HepG2 (cell line): ENCODE measurements at regions of chr1 and their contacts with region 1.

Region 1: DNA sequence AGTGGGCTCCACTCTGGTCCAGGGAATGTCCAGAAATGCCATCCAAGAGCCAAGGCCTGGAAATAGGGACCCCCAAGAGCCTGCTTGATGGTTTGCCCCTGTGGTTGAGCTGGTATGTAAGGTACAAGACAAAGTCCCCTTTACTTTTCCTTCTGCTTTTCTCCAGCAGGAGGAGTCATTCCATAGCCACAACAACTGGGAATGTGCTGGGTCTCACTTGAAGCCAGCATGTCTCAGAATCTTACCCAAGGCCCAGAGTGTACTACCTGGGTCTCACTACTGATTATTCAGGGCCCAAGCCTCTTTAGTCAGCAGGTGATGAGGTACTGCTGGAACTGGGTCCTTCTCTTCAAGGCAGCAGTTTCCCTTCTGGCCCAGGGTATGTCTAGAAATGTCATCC is 62.1 kb upstream of the CD55 start:
- DNase-seq: peak; percentile 23
- ATAC-seq: peak; percentile 72
- H3K4me3 ChIP-seq: no peak overlapping the region
- H3K27ac ChIP-seq: no peak overlapping the region
- H3K4me1 ChIP-seq: no peaks in the 10 kb centered on the region
- H3K27me3 ChIP-seq: no peaks in the 10 kb centered on the region
- CTCF ChIP-seq: peak; percentile 53
- EP300 ChIP-seq: no peak
- POLR2A ChIP-seq: no peak
- RAD21 ChIP-seq: 0 out of 2 replicates have a peak, but pooled peaks have one; percentile 29

Region 2: DNA sequence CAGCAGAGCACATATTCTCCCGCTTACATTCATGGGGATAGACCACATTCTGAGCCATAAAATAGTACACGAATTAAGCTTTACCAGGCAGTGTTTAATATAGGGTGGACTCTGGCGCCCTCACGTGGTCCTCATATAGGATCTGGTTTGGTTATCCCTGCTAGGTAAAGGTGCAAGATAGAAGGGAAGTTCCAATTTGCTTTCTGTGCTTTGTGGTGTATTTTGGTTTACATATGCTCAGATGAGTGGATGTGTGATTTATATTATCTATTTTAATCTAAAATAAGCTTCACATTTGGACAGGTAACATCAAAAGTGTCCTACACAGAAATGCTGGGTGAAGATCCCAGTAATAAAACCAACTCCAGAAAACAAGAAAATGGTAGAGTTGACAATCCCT is 240.2 kb after region 1 on chr1:
- CTCF ChIA-PET with region 1: interaction called, 3 read pairs
- POLR2A ChIA-PET with region 1: no interaction called
- in situ Hi-C with region 1: no loop called
- intact Hi-C with region 1: loop called (anchors 5 kb)
- DNase-seq: peak; percentile 47
- ATAC-seq: peak; percentile 80
- H3K4me3 ChIP-seq: no peak overlapping the region
- H3K27ac ChIP-seq: no peak overlapping the region
- H3K4me1 ChIP-seq: no peaks in the 10 kb centered on the region
- H3K27me3 ChIP-seq: peaks cover 4 to 31% of the 10 kb centered on the region in 2 experiments; a peak in 3 of 5 replicates
- CTCF ChIP-seq: peak; percentile 83
- EP300 ChIP-seq: no peak
- POLR2A ChIP-seq: no peak
- RAD21 ChIP-seq: peak; percentile 43; the same call in 1 of the 2 replicates